Caco-2 (cell line): ENCODE measurements at regions of chr11 and their contacts with region 1.

Region 1: DNA sequence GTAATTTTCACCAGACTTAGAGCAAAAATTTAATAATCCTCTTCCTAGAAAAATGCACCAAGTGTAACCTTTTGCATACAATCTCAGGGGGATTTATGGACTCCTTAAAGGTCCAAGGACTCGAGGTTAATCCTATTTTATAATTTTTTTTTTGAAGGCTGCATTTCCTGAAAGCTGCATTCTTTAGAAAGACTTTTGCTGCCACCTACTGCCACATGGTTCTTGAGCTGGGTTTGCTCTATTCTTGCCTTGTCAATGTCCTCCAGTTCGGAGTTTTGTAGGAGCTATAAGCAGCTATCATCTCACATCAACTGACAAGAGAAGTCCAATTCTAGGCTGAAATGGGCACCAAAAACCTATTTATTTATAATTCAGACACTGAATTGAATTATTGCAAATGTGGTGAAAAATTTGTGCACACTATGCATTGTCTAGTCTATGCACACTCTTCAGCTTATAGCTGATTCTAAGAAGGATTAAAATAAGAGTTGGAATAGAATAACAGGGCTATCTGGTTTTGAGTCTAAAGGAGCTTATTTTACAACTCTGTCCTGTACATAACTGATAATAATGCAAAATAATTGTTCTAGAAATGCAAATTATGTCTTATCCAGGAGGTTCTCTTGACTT is 31.3 kb downstream of the TRAF6 start:
- DNase-seq: peak in 1 of 2 experiments; percentile 57
- H3K4me3 ChIP-seq: no peak overlapping the region
- H3K4me3 Mint-ChIP-seq: no peak overlapping the region
- H3K27ac Mint-ChIP-seq: no peak overlapping the region
- H3K4me1 ChIP-seq: no peaks in the 10 kb centered on the region
- H3K4me1 Mint-ChIP-seq: no peaks in the 10 kb centered on the region
- H3K27me3 ChIP-seq: no peaks in the 10 kb centered on the region
- H3K27me3 Mint-ChIP-seq: no peaks in the 10 kb centered on the region
- CTCF ChIP-seq: peak in 1 of 2 experiments; percentile 74

Region 2: GRCh38 chr11:36265793-36266628 is 212.8 kb before region 1 on chr11:
- CTCF ChIA-PET with region 1: interaction called, 10 read pairs
- POLR2A ChIA-PET with region 1: no interaction called
- intact Hi-C with region 1: loop called (anchors 1 kb)
- DNase-seq: peak; percentile 54 to 75
- H3K4me3 ChIP-seq: no peak overlapping the region
- H3K4me3 Mint-ChIP-seq: no peak overlapping the region
- H3K27ac Mint-ChIP-seq: no peak overlapping the region
- H3K4me1 ChIP-seq: no peaks in the 10 kb centered on the region
- H3K4me1 Mint-ChIP-seq: peaks cover 6% of the 10 kb centered on the region
- H3K27me3 ChIP-seq: no peaks in the 10 kb centered on the region
- H3K27me3 Mint-ChIP-seq: no peaks in the 10 kb centered on the region
- CTCF ChIP-seq: peak; percentile 91 to 92

Region 3: GRCh38 chr11:36292311-36292722 is 186.5 kb before region 1 on chr11:
- CTCF ChIA-PET with region 1: interaction called, 20 read pairs
- POLR2A ChIA-PET with region 1: no interaction called
- intact Hi-C with region 1: loop called (anchors 1 kb)
- DNase-seq: peak in 1 of 2 experiments; percentile 32
- H3K4me3 ChIP-seq: no peak overlapping the region
- H3K4me3 Mint-ChIP-seq: no peak overlapping the region
- H3K27ac Mint-ChIP-seq: no peak overlapping the region
- H3K4me1 ChIP-seq: no peaks in the 10 kb centered on the region
- H3K4me1 Mint-ChIP-seq: peaks cover 15% of the 10 kb centered on the region
- H3K27me3 ChIP-seq: no peaks in the 10 kb centered on the region
- H3K27me3 Mint-ChIP-seq: peaks cover 19% of the 10 kb centered on the region
- CTCF ChIP-seq: peak; percentile 21 to 63

Region 4: DNA sequence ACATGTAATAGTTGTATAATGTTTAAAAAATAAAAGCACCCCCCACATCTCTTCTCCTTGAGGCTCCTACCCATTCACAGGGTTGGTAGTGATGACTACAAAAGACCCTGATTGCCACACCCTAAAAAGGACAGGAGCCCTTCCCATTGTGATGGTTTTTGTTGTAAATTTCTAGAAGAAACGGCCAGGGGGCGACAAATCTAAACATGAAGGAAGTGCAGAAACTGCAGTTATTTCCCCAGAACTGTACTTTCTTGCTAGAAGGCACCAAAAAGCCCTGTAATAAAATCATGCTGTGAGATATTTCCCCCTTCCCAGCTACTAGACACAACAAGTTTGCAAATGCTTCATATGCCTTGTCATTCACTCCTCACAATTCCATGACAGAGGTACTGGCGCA is 171.9 kb before region 1 on chr11:
- CTCF ChIA-PET with region 1: interaction called, 12 read pairs
- POLR2A ChIA-PET with region 1: no interaction called
- intact Hi-C with region 1: loop called (anchors 1 kb)
- DNase-seq: peak in 1 of 2 experiments; percentile 35
- H3K4me3 ChIP-seq: no peak overlapping the region
- H3K4me3 Mint-ChIP-seq: no peak overlapping the region
- H3K27ac Mint-ChIP-seq: no peak overlapping the region
- H3K4me1 ChIP-seq: no peaks in the 10 kb centered on the region
- H3K4me1 Mint-ChIP-seq: no peaks in the 10 kb centered on the region
- H3K27me3 ChIP-seq: no peaks in the 10 kb centered on the region
- H3K27me3 Mint-ChIP-seq: no peaks in the 10 kb centered on the region
- CTCF ChIP-seq: peak; percentile 66 to 68

Region 5: DNA sequence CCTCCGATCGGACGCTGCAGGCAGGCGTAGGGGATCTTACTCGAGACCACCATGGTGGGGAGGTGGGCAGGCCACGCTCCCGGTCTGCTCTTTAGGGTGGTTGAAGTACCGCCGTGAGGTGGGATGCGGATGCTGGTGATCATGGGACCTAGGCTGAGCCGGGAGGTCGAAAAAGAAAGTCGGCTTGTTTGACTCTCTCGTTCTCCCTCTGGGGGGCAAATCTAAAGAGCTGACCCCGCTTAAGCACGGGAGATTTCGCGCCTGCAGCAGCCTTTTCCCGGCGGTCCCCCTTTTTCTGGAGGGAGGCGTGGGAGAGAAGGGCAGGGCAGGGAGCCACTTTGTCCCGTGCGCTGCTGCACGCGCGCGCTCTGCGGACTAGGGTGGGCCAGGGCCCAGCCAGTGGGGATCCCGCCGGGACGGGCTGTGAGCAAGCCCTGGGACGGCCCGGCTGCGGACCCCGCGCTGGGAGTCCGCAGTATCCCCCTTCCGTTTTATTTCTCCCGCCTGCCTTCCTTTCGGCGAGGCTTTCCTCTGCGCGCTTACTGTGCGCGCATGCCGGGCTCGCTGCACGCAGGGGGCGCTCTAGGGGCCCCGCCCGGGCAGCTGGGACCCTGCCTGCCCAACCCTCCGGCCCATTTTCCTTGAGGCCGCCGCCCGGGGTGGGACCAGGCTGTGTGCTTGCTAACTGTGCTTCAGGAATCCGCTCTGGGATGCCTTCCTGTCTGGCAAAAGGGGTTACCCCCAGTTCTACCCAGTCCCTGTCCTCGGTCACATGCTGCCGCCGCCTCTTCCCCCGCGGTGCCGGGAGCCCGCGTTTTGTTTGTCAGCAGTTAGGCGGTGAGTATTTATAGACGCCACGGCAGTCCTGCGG is 101.7 kb before region 1 on chr11:
- CTCF ChIA-PET with region 1: no interaction called
- POLR2A ChIA-PET with region 1: no interaction called
- intact Hi-C with region 1: loop called (anchors 5 kb)
- DNase-seq: peak; percentile 38 to 45
- H3K4me3 ChIP-seq: peak overlapping the region; percentile 44
- H3K4me3 Mint-ChIP-seq: peak overlapping the region; percentile 75
- H3K27ac Mint-ChIP-seq: no peak overlapping the region
- H3K4me1 ChIP-seq: 0 out of 2 replicates have a peak, but pooled peaks cover 4% of the 10 kb centered on the region
- H3K4me1 Mint-ChIP-seq: no peaks in the 10 kb centered on the region
- H3K27me3 ChIP-seq: peaks cover 7% of the 10 kb centered on the region
- H3K27me3 Mint-ChIP-seq: peaks cover 31% of the 10 kb centered on the region
- CTCF ChIP-seq: peak; percentile 34 to 60

Region 6: GRCh38 chr11:36492724-36493304 is 14.0 kb after region 1 on chr11:
- CTCF ChIA-PET with region 1: interaction called, 22 read pairs
- POLR2A ChIA-PET with region 1: no interaction called
- intact Hi-C with region 1: no loop called
- DNase-seq: peak in 1 of 2 experiments; percentile 45
- H3K4me3 ChIP-seq: no peak overlapping the region
- H3K4me3 Mint-ChIP-seq: no peak overlapping the region
- H3K27ac Mint-ChIP-seq: no peak overlapping the region
- H3K4me1 ChIP-seq: no peaks in the 10 kb centered on the region
- H3K4me1 Mint-ChIP-seq: no peaks in the 10 kb centered on the region
- H3K27me3 ChIP-seq: no peaks in the 10 kb centered on the region
- H3K27me3 Mint-ChIP-seq: no peaks in the 10 kb centered on the region
- CTCF ChIP-seq: peak; percentile 71 to 83

Region 7: GRCh38 chr11:36719358-36720107 is 240.7 kb after region 1 on chr11:
- CTCF ChIA-PET with region 1: no interaction called
- POLR2A ChIA-PET with region 1: no interaction called
- intact Hi-C with region 1: no loop called
- DNase-seq: no peak
- H3K4me3 ChIP-seq: no peak overlapping the region
- H3K4me3 Mint-ChIP-seq: no peak overlapping the region
- H3K27ac Mint-ChIP-seq: no peak overlapping the region
- H3K4me1 ChIP-seq: no peaks in the 10 kb centered on the region
- H3K4me1 Mint-ChIP-seq: no peaks in the 10 kb centered on the region
- H3K27me3 ChIP-seq: no peaks in the 10 kb centered on the region; the same call in 1 of the 2 replicates
- H3K27me3 Mint-ChIP-seq: peaks cover 14% of the 10 kb centered on the region
- CTCF ChIP-seq: no peak